Vagina (tissue), 2 donors: ENCODE measurements at regions of chr5 and their contacts with region 1.

Region 1: DNA sequence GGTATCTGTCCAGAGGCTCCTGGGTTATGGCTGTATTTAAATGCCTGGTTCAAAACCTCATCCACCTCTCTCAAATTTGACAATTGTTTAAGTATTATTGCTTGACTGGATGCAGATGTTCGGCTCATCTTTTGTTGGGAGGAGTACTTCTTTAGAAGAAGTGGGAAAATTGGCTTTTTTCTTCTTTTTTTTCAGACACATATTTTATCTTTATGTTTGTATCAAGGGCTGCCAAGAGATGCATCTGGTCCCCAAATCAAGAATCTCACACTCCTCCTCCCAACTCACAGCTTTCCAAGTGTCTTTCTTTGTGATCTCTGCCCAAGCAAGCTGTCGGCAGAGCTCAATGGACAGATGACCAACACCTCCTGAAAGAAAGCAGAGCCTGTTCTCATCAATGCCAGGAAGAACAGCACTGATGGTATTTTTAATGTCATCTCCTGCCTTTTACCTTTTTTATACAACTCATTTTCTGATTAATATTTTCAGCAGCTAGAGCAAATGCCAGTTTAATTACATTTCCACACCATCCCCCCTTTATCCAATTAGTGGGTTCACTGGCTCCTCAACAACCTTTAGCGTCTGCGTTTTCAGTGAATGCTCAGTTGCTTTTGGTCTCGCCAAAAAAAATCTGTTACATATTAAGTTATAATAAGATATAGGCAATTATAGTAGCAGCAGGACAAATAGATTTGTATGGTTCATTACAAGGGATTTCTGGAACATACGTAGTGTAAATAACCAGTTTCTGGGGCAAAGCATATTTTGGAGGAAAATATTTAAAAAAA is 110.3 kb upstream of the SLIT3 start:
- DNase-seq: no peak
- H3K4me3 ChIP-seq: no peak overlapping the region
- H3K27ac ChIP-seq: peak overlapping the region; percentile 31
- H3K4me1 ChIP-seq: peaks cover 17% of the 10 kb centered on the region
- H3K27me3 ChIP-seq: no peaks in the 10 kb centered on the region
- CTCF ChIP-seq: no peak
- POLR2A ChIP-seq: no peak

Region 2: DNA sequence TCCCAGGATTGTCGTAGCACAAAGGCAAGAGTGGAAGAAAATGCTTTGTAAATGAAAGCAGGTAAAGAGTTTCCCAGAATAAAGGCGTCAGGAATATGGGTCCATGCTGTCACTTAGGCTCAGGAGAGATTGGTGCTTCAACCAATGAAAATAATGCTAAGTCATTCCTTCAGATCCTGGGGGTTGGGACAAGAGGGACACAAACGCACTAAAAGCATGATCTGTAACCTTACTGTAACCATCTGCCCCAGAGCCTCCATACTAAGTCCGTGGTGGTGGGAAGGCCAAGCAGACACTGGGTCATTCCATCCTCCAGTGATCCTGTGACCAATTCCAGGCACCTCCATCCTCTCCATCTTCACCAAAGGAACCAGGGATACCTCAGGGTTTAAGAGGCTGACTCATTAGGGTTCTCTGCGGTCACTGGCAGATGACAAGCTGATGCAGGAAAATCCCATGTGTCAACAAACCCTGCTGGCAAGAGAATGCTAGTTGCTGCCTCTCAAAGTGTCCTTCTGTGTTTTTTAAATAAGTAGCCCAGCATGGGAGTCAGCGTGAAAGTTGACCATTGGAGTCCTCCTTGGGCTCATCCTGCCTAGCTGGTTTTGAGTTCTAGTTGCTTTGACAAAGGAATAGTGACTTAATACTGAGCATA is 310.6 kb before region 1 on chr5:
- intact Hi-C with region 1: no loop called
- DNase-seq: no peak
- H3K4me3 ChIP-seq: no peak overlapping the region
- H3K27ac ChIP-seq: peak overlapping the region; percentile 72
- H3K4me1 ChIP-seq: peaks cover 45% of the 10 kb centered on the region
- H3K27me3 ChIP-seq: no peaks in the 10 kb centered on the region
- CTCF ChIP-seq: no peak
- POLR2A ChIP-seq: no peak

Region 3: GRCh38 chr5:169350759-169351240 is 60.4 kb before region 1 on chr5:
- intact Hi-C with region 1: no loop called
- DNase-seq: no peak
- H3K4me3 ChIP-seq: no peak overlapping the region
- H3K27ac ChIP-seq: no peak overlapping the region
- H3K4me1 ChIP-seq: peaks cover 15% of the 10 kb centered on the region
- H3K27me3 ChIP-seq: no peaks in the 10 kb centered on the region
- CTCF ChIP-seq: no peak
- POLR2A ChIP-seq: no peak

Region 4: GRCh38 chr5:169431386-169431785 is 20.2 kb after region 1 on chr5:
- intact Hi-C with region 1: loop called (anchors 2 kb)
- DNase-seq: no peak
- H3K4me3 ChIP-seq: no peak overlapping the region
- H3K27ac ChIP-seq: no peak overlapping the region
- H3K4me1 ChIP-seq: no peaks in the 10 kb centered on the region
- H3K27me3 ChIP-seq: no peaks in the 10 kb centered on the region
- CTCF ChIP-seq: no peak
- POLR2A ChIP-seq: no peak